CD14-positive monocyte (primary cell): ENCODE measurements at regions of chr22 and their contacts with region 1.

Region 1: DNA sequence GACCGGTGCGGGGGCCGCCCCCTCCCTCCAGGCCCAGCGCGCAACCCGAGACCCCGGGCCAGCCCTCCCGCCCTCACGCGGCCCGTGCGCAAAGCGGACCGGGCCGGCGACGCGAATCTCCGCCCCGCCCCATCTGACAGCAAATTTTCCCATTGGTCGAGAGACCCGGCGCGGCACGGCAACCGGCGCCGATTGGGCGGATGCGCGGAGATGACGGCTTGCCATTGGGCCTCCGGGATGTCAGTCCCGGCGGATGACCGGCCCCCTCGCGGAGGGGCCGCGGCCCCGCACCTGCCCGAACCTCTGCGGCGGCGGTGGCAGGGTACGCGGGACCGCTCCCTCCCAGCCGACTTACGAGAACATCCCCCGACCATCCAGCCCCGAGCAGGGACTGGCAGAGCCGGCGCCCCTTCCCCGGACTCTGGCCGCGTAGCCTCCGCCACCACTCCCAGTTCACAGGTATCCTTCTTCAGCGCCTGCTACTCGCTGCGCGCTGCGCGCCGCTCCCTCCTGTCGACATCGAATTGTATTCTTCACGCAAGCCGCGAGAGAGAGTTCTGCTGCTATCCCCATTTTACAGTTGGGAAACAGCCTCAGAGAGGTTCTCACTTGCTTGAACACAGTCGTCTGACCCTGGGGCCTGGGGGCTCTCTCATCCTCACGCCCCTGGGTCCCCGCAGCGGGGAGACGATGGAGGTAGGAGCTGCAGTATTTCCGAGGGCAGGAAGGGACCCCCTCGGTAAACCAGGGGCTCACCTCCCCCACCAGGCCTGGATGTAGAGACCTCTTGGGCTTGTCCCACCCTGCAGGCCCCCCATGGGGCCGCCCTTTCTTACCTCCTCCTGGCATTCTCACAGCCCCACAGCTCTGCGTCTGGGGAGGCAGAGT is at the start of gene ARVCF:
- DNase-seq: peak; percentile 88 to 91 (median 89)
- H3K4me3 ChIP-seq: peak within 1 kb of the TSS; percentile 53 to 79 (median 59)
- H3K4me3 Mint-ChIP-seq: peak within 1 kb of the TSS; percentile 85 to 94
- H3K27ac ChIP-seq: no peak within 1 kb of the TSS
- H3K27ac Mint-ChIP-seq: no peak within 1 kb of the TSS
- H3K4me1 ChIP-seq: peaks cover 18 to 31% of the 10 kb centered on the region in 2 donors
- H3K4me1 Mint-ChIP-seq: peaks cover 17% of the 10 kb centered on the region
- H3K27me3 ChIP-seq: peaks cover 17 to 37% of the 10 kb centered on the region in 2 donors
- H3K27me3 Mint-ChIP-seq: peaks cover 37 to 53% (median 45%) of the 10 kb centered on the region in 3 donors
- CTCF ChIP-seq: no peak
- polyA plus RNA-seq, gene ARVCF: 0.31 to 2.6 (median 0.44) TPM

Region 2: DNA sequence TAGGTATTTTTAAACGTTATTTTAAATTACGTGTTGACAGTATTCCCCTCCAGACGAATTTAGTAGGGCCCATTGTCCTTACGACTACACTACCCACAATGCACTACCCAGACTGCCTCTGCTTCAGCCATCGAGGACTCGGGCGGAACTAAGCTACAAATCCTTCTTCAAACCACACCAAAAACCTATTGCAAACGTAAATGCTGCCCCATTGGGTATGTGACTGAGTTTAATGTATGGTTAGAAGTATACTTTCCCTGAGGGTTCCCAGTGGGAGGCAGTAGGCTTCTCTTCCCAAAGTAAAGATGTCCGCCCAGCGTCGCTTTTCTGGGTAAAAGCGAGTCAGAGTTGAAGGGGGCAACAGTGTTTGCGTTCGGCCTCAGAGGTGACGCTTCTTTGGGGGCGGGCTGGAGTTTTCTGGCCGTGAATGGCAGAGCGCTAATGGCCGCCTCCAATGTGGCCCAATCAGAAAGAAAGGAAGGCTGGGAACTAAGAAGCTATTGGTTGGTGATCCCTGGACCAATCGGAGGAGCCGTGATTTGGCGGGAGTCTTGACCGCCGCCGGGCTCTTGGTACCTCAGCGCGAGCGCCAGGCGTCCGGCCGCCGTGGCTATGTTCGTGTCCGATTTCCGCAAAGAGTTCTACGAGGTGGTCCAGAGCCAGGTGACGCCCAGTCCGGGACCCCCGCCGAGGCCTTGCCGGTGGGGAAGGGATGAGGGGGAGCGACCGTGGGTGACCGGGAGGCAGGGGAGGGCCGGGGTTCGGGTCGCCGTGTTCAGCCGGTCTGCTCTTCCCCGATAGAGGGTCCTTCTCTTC is 537.4 kb before region 1 on chr22 and contains the start of gene CDC45:
- intact Hi-C with region 1: loop called in 1 of 2 experiments (anchors 5 kb)
- DNase-seq: peak; percentile 96 to 97 (median 97)
- H3K4me3 ChIP-seq: peak within 1 kb of the TSS; percentile 69 to 94 (median 87)
- H3K4me3 Mint-ChIP-seq: peak within 1 kb of the TSS; percentile 81 to 89
- H3K27ac ChIP-seq: peak within 1 kb of the TSS; percentile 72 to 100
- H3K27ac Mint-ChIP-seq: peak within 1 kb of the TSS; percentile 97 to 99 (median 99)
- H3K4me1 ChIP-seq: peaks cover 22 to 28% of the 10 kb centered on the region in 2 donors
- H3K4me1 Mint-ChIP-seq: peaks cover 27% of the 10 kb centered on the region
- H3K27me3 ChIP-seq: no peaks in the 10 kb centered on the region
- H3K27me3 Mint-ChIP-seq: no peaks in the 10 kb centered on the region
- CTCF ChIP-seq: no peak
- polyA plus RNA-seq, gene CDC45: 0.04 TPM in 1 of 3 donors, not detected in the others

Region 3: DNA sequence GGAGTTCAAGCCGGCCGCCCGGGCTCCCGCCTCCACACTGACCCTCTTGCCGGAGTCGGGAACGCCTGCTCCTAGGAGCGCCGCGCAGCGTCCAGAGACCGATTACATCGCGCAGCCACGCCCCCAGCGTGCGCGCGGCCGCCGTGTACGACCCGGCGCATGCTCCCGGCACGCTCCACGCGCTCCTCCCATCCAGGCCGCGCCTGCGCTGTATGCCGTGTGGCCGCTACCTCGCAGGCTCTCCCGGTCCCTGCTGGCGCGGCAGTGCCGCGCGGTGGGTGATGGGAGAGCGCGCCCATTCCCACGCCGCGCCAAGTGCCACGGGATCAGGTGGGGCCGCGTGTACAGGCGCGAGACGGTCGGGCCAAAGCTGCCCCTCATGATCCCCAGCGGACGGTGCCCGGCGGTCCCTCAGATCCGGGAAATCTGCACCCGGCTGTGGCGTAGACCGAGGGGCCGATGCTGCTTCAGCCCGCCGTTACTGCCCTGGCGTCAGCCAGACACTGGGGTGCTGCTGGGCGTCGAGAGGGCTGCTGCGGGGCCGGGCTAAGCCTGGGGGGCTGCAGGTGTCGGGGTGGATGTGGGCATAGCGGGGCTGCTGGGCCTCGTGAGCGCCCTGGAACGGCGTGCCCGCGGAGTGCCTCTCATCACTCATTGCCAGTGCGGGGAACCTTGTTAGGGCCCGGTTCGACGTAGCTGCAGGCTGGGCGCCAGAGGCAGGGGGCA is 162.0 kb before region 1 on chr22 and contains the starts of genes GNB1L and RTL10:
- intact Hi-C with region 1: loop called in 1 of 2 experiments (anchors 10 kb)
- DNase-seq: peak; percentile 94 to 97 (median 96)
- H3K4me3 ChIP-seq: peak within 1 kb of the TSS; percentile 55 to 97 (median 93)
- H3K4me3 Mint-ChIP-seq: peak within 1 kb of the TSS; percentile 86 to 93
- H3K27ac ChIP-seq: peak within 1 kb of the TSS; percentile 88 to 91
- H3K27ac Mint-ChIP-seq: peak within 1 kb of the TSS; percentile 84 to 94 (median 92)
- H3K4me1 ChIP-seq: peaks cover 29 to 31% of the 10 kb centered on the region in 2 donors
- H3K4me1 Mint-ChIP-seq: peaks cover 30% of the 10 kb centered on the region
- H3K27me3 ChIP-seq: no peaks in the 10 kb centered on the region
- H3K27me3 Mint-ChIP-seq: peaks cover 0 to 4% (median 1%) of the 10 kb centered on the region in 3 donors
- CTCF ChIP-seq: no peak
- polyA plus RNA-seq, gene GNB1L: 3.4 to 6.0 (median 4.8) TPM
- polyA plus RNA-seq, gene RTL10: 1.4 to 6.5 (median 1.5) TPM

Region 4: GRCh38 chr22:19986410-19987341 is 30.3 kb before region 1 on chr22:
- intact Hi-C with region 1: loop called in 1 of 2 experiments (anchors 5 kb)
- DNase-seq: peak; percentile 47 to 60 (median 47)
- H3K4me3 ChIP-seq: peak overlapping the region; percentile 39 to 84 (median 57)
- H3K4me3 Mint-ChIP-seq: peak overlapping the region; percentile 76 to 84
- H3K27ac ChIP-seq: peak overlapping the region in 1 of 2 donors; percentile 20
- H3K27ac Mint-ChIP-seq: no peak overlapping the region
- H3K4me1 ChIP-seq: peaks cover 8 to 11% of the 10 kb centered on the region in 2 donors
- H3K4me1 Mint-ChIP-seq: peaks cover 4% of the 10 kb centered on the region
- H3K27me3 ChIP-seq: peaks cover 0 to 5% of the 10 kb centered on the region in 2 donors
- H3K27me3 Mint-ChIP-seq: peaks cover 2 to 16% (median 10%) of the 10 kb centered on the region in 3 donors
- CTCF ChIP-seq: no peak

Region 5: GRCh38 chr22:20116951-20117645 is 100.1 kb after region 1 on chr22 and contains the start of gene TRMT2A:
- intact Hi-C with region 1: loop called (anchors 5 to 10 kb)
- DNase-seq: peak; percentile 97 to 99 (median 98)
- H3K4me3 ChIP-seq: peak within 1 kb of the TSS; percentile 70 to 83 (median 76)
- H3K4me3 Mint-ChIP-seq: peak within 1 kb of the TSS; percentile 80 to 90
- H3K27ac ChIP-seq: peak within 1 kb of the TSS; percentile 80 to 98
- H3K27ac Mint-ChIP-seq: peak within 1 kb of the TSS; percentile 89 to 97 (median 95)
- H3K4me1 ChIP-seq: peaks cover 21 to 33% of the 10 kb centered on the region in 2 donors
- H3K4me1 Mint-ChIP-seq: peaks cover 22% of the 10 kb centered on the region
- H3K27me3 ChIP-seq: no peaks in the 10 kb centered on the region
- H3K27me3 Mint-ChIP-seq: peaks cover 0 to 1% (median 0%) of the 10 kb centered on the region in 3 donors
- CTCF ChIP-seq: no peak
- polyA plus RNA-seq, gene TRMT2A: 20.1 to 121 (median 23.5) TPM